ENCODE measurements at regions of chr14 and their contacts with region 1.

Region 1: DNA sequence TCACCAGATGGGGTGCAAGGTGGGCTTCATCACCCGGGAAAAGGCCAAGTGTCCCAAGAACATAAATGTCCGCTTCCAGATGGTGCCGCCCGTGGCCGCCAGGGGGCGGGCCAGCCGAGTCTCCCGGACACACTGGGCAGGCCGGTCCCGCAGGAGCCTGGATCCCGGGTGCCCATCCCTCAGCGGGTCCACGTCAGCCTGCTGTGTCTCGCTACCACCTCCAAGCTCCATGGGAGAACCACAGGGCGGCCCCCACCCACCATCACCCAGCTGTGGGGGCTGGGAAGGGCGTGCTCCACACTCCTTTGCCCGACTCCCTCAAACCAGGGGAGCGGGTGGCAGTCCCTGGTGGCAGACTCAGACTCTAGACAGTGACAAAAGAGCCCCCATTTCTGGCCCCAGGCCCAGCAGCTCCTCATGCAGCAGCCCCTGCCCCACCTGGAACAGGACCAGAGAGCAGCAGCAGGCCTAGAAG is 22.0 kb upstream of the NUDT14 start:
- DNase-seq: peak; percentile 76 to 92 (median 82)
- H3K4me3 ChIP-seq: no peak overlapping the region
- H3K27ac ChIP-seq: no peak overlapping the region
- H3K4me1 ChIP-seq: peaks cover 14 to 31% of the 10 kb centered on the region in 2 donors
- H3K27me3 ChIP-seq: peaks cover 16% of the 10 kb centered on the region
- CTCF ChIP-seq: peak; percentile 83 to 96 (median 92)
- POLR2A ChIP-seq: no peak

Region 2: DNA sequence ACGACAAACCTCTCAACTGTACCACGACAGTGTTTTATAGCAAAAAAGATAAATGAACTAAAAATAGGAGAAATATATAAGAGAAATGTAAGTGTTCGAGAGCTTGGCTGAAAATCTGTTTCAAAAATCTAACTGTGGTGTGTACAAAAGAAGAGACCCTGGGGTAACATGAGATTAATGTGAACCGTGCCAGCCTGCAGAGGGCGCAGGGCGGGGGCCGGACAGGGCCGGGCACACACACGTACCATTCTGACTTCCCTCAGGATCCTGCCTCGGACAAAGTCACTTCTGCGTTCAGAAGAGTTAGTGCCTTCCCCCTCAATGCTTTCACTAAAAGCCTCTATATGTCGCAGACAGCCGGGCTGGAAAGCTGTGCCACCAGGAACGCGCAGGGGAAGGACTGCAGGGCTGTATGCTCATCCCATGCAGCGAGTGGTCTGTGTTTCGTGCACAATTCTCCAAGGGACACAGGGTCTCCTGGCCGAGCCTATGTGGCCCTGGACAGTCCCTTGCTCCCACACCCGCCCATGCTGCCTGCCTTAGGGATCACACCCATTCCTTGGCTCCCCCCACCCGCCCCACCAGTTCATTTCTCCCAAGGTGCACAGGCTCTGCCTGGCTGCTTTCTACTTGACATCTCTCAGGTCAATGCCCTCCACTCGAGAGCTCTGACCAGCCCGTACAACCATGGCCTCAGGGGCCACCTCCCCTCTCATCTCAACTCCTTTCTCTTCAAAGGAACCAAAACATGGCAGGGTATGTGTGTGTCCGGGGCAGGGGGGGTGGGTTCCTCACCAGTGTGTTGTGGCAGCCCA is 190.7 kb before region 1 on chr14:
- intact Hi-C with region 1: no loop called
- DNase-seq: peak in 3 of 7 donors; percentile 27 to 42 (median 32)
- H3K4me3 ChIP-seq: no peak overlapping the region
- H3K27ac ChIP-seq: no peak overlapping the region
- H3K4me1 ChIP-seq: peaks cover 0 to 4% of the 10 kb centered on the region in 2 donors
- H3K27me3 ChIP-seq: no peaks in the 10 kb centered on the region
- CTCF ChIP-seq: peak in 3 of 6 experiments; percentile 20 to 38 (median 25)
- POLR2A ChIP-seq: no peak

Region 3: GRCh38 chr14:105281371-105282097 is 78.4 kb after region 1 on chr14:
- intact Hi-C with region 1: loop called in 1 of 2 experiments (anchors 5 kb)
- DNase-seq: peak; percentile 49 to 71 (median 63)
- H3K4me3 ChIP-seq: no peak overlapping the region
- H3K27ac ChIP-seq: peak overlapping the region in 1 of 5 donors; percentile 22
- H3K4me1 ChIP-seq: peaks cover 0 to 3% of the 10 kb centered on the region in 2 donors
- H3K27me3 ChIP-seq: no peaks in the 10 kb centered on the region
- CTCF ChIP-seq: peak; percentile 24 to 71 (median 63)
- POLR2A ChIP-seq: no peak

Region 4: DNA sequence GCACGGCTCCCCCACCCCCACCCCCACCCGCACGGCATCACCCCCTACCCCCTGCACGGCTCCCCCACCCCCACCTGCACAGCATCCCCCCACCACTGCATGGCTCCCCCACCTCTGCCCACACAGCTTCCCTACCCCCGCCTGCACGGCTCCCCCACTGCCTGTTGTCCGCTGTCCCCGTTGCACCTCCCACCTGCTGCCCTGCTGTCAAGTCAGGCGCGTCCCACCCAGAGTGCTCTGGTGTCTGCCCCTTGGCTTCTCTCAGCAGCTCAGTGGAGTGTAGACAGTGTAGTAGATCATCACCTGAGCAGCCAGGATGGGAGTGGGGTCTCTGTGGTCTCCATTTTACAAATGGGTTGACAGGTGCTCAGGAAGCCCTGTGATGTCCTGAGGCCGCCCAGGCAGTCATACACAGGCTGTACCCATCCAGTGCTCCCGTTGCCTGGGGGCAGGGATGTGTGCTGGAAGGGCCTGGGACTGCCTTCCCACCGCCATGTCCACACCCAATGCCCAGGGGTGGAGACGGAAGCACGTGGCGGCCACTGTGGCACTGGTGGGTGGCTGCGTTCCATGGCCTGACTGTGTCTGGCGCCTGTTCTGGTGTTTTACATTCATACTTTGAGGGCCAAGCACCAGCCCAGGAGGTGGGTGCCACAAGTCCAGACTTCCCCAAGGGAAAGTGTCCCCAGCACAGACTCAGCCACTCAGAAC is 143.9 kb after region 1 on chr14:
- intact Hi-C with region 1: loop called (anchors 2 to 5 kb)
- DNase-seq: no peak
- H3K4me3 ChIP-seq: no peak overlapping the region
- H3K27ac ChIP-seq: no peak overlapping the region
- H3K4me1 ChIP-seq: peaks cover 0 to 4% of the 10 kb centered on the region in 2 donors
- H3K27me3 ChIP-seq: no peaks in the 10 kb centered on the region
- CTCF ChIP-seq: no peak
- POLR2A ChIP-seq: no peak

Region 5: GRCh38 chr14:105351920-105352851 is 149.1 kb after region 1 on chr14:
- intact Hi-C with region 1: loop called (anchors 2 to 5 kb)
- DNase-seq: peak; percentile 88 to 97 (median 89)
- H3K4me3 ChIP-seq: no peak overlapping the region
- H3K27ac ChIP-seq: peak overlapping the region in 1 of 5 donors; percentile 52
- H3K4me1 ChIP-seq: peaks cover 0 to 5% of the 10 kb centered on the region in 2 donors
- H3K27me3 ChIP-seq: no peaks in the 10 kb centered on the region
- CTCF ChIP-seq: peak; percentile 77 to 97 (median 91)
- POLR2A ChIP-seq: no peak